IMR-90 (cell line): ENCODE measurements at regions of chr17 and their contacts with region 1.

Region 1: DNA sequence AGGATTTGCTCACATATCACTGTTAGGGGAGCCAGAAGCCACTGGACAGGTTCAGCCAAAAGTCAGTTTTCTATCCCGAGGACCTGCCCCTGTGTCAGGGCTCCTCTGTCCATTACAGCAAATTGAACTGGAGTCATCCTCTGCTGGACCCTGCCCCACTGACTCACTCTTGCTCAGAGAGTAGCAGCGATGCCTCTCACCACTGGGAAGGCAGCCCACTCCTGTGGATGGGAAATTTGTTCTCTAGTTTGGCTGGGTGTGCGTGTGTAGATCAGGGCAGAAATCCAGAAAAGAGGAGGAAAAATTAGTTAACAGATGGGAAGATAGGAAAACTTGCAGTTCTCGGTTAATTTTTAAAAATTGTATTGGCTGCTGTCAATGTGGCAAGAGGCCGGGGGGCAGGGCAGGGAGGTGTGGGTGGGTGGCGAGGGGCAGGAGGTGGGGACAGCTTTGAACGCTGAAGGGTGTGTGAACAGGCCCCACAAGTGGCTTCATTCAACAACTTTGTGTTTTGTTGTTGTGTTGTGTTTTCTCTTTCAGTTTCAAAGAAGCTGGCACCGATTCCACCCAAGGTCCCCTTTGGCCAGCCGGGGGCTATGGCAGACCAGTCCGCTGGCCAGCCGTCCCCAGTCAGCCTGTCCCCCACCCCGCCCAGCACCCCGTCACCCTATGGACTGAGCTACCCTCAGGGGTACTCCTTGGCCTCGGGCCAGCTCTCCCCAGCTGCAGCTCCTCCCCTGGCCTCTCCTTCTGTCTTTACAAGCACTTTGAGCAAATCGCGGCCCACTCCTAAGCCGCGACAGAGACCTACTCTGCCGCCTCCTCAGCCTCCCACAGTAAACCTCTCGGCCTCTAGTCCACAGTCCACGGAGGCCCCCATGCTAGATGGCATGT is 33.6 kb downstream of the ELAC2 start:
- DNase-seq: peak; percentile 96
- ATAC-seq: peak; percentile 94
- H3K4me3 ChIP-seq: no peak overlapping the region
- H3K27ac ChIP-seq: no peak overlapping the region
- H3K4me1 ChIP-seq: peaks cover 4% of the 10 kb centered on the region; the same call in 1 of the 2 replicates
- H3K27me3 ChIP-seq: no peaks in the 10 kb centered on the region
- CTCF ChIP-seq: no peak
- POLR2A ChIP-seq: no peak
- RAD21 ChIP-seq: no peak

Region 2: GRCh38 chr17:12667299-12667958 is 316.8 kb before region 1 on chr17:
- CTCF ChIA-PET with region 1: no interaction called
- POLR2A ChIA-PET with region 1: no interaction called
- dilution Hi-C with region 1: no loop called
- in situ Hi-C with region 1: no loop called
- intact Hi-C with region 1: no loop called
- DNase-seq: peak; percentile 89
- ATAC-seq: peak; percentile 63
- H3K4me3 ChIP-seq: peak overlapping the region; percentile 94
- H3K27ac ChIP-seq: peak overlapping the region; percentile 42
- H3K4me1 ChIP-seq: peaks cover 9% of the 10 kb centered on the region
- H3K27me3 ChIP-seq: no peaks in the 10 kb centered on the region
- CTCF ChIP-seq: peak; percentile 87
- POLR2A ChIP-seq: peak; percentile 46
- RAD21 ChIP-seq: peak; percentile 93

Region 3: DNA sequence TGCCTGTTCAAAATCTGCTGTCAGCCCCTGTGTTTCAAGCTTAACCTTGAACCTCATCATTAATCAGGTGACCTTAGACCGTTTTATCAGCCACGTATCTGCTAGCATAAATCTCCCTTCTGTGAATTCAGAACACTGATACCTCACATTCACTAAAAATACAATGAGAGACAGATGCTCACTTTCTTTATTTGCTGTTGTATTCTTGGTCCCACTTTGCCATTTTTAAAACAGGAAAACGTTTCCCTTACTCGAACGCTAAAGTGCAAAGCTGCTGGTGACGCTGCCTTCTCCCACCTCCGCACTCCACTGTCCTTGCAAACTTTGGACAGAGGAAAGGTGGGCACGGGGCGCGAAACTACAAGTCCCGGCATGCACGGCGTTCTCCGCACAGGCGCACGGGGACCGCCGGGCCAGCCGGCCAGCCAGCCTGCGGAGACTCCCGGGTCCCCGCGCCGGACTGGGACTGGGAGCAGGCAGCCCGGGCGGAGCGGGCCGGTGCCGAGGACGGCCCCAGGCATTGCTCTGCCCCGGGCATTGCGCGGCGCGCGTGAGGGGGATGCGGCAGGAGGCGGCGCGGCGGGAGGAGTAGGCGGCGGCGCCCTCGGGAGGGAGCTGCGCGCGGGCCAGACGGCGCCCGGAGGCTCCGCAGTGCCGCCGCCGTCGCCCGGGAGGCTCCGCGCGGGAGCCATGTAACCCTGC is 195.0 kb before region 1 on chr17 and contains the start of gene ARHGAP44:
- CTCF ChIA-PET with region 1: no interaction called
- POLR2A ChIA-PET with region 1: no interaction called
- dilution Hi-C with region 1: no loop called
- in situ Hi-C with region 1: no loop called
- intact Hi-C with region 1: loop called (anchors 10 kb)
- DNase-seq: peak; percentile 59
- ATAC-seq: peak; percentile 99
- H3K4me3 ChIP-seq: peak within 1 kb of the TSS; percentile 68
- H3K27ac ChIP-seq: no peak within 1 kb of the TSS
- H3K4me1 ChIP-seq: no peaks in the 10 kb centered on the region
- H3K27me3 ChIP-seq: peaks cover 22% of the 10 kb centered on the region
- CTCF ChIP-seq: no peak
- POLR2A ChIP-seq: no peak
- RAD21 ChIP-seq: 0 out of 2 replicates have a peak, but pooled peaks have one; percentile 13
- total RNA-seq, gene ARHGAP44: 0.54 and 1.1 TPM in 2 replicates

Region 4: DNA sequence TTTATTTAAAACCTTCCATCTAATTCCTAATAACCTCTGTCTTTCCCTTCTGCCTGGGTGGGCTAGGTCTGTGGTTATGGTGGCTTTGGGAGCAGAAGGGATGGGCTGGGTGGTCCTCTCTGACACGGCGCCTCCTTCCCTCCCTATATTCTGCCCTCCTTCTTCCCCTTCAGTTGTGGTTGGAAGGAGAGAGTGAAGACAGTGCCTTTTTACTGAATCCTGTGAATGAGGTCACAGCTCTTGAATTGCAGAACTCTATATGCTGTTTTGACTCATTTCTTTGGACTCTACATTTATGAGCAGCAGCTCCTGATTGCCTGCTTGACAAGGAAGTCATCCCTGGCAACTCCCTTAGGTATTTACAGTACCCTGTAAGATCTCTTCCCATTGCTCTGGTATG is 289.6 kb after region 1 on chr17:
- CTCF ChIA-PET with region 1: no interaction called
- POLR2A ChIA-PET with region 1: no interaction called
- dilution Hi-C with region 1: no loop called
- in situ Hi-C with region 1: no loop called
- intact Hi-C with region 1: no loop called
- DNase-seq: peak; percentile 4
- ATAC-seq: no peak
- H3K4me3 ChIP-seq: no peak overlapping the region
- H3K27ac ChIP-seq: no peak overlapping the region
- H3K4me1 ChIP-seq: no peaks in the 10 kb centered on the region
- H3K27me3 ChIP-seq: peaks cover 5% of the 10 kb centered on the region
- CTCF ChIP-seq: no peak
- POLR2A ChIP-seq: no peak
- RAD21 ChIP-seq: no peak